Mammary epithelial cell (primary cell): ENCODE measurements at regions of chr6 and their contacts with region 1.

Region 1: DNA sequence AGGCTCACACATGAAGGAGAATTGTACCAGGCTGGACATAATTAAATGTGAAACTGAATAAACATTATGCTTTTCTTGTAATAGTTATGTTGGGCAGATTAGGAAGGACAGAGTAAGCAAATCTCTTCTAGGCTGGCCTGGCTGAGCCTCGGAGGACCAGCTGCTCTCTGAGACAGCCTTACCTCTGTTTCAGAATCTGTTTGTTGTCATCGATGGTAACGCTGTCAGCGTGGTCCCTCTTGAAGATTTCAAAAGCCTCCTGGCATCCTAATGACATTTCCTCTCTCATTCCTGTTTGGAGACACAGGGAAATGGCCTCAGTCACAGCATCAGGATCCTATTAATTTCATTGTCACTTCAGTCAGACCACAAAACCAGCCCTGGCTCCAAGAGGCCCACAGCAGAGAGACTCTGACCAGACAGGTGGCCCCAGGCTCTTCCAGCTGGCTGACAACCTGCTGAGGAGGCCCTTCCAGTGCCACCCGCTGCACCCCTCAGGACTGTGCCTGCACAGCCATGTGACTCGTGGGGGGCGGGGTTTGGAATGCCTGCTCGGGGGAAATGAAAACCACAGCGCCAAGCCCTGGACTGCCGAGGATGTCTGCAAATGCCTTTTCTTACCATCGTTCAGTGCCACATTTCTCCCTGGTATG is 108.5 kb upstream of the KCNK16 start:
- DNase-seq: no peak
- H3K4me3 ChIP-seq: no peak overlapping the region
- H3K27ac ChIP-seq: no peak overlapping the region
- H3K4me1 ChIP-seq: peaks cover 42% of the 10 kb centered on the region
- H3K27me3 ChIP-seq: no peaks in the 10 kb centered on the region
- CTCF ChIP-seq: no peak

Region 2: DNA sequence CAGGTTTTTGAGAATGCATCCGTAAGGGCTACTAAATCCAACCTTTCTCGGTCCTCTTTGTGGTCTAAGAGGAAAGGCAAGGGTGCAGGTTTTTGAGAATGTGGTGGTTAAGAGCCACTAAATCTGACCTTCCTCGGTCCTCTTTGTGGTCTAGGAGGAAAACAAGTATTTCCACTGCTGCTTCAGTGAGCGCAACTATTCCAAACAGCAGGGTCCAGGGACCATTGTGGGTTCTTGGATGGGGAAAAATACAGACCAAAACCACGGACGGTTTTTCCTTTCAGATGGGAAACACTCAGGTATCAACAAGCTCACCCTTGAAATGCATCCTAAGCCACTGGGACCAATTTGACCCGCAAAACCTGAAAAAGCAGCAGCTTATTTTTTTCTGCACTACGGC is 813.1 kb before region 1 on chr6:
- CTCF ChIA-PET with region 1: no interaction called
- dilution Hi-C with region 1: no loop called
- in situ Hi-C with region 1: no loop called
- intact Hi-C with region 1: no loop called
- DNase-seq: no peak
- H3K4me3 ChIP-seq: no peak overlapping the region
- H3K27ac ChIP-seq: no peak overlapping the region
- H3K4me1 ChIP-seq: no peaks in the 10 kb centered on the region
- H3K27me3 ChIP-seq: no peaks in the 10 kb centered on the region
- CTCF ChIP-seq: no peak

Region 3: GRCh38 chr6:39416728-39417127 is 14.3 kb before region 1 on chr6:
- CTCF ChIA-PET with region 1: no interaction called
- dilution Hi-C with region 1: no loop called
- in situ Hi-C with region 1: no loop called
- intact Hi-C with region 1: loop called (anchors 1 kb)
- DNase-seq: peak; percentile 32
- H3K4me3 ChIP-seq: no peak overlapping the region
- H3K27ac ChIP-seq: peak overlapping the region; percentile 91
- H3K4me1 ChIP-seq: peaks cover 28% of the 10 kb centered on the region
- H3K27me3 ChIP-seq: no peaks in the 10 kb centered on the region
- CTCF ChIP-seq: no peak

Region 4: GRCh38 chr6:39553029-39553428 is 122.0 kb after region 1 on chr6:
- CTCF ChIA-PET with region 1: no interaction called
- dilution Hi-C with region 1: no loop called
- in situ Hi-C with region 1: no loop called
- intact Hi-C with region 1: no loop called
- DNase-seq: no peak
- H3K4me3 ChIP-seq: no peak overlapping the region
- H3K27ac ChIP-seq: no peak overlapping the region
- H3K4me1 ChIP-seq: no peaks in the 10 kb centered on the region
- H3K27me3 ChIP-seq: peaks cover 2% of the 10 kb centered on the region
- CTCF ChIP-seq: no peak